Activated naive CD4-positive, alpha-beta T cell treated with anti-CD3 and anti-CD28 coated beads for 36 hours (primary cell): ENCODE measurements at regions of chr4 and their contacts with region 1.

Region 1: DNA sequence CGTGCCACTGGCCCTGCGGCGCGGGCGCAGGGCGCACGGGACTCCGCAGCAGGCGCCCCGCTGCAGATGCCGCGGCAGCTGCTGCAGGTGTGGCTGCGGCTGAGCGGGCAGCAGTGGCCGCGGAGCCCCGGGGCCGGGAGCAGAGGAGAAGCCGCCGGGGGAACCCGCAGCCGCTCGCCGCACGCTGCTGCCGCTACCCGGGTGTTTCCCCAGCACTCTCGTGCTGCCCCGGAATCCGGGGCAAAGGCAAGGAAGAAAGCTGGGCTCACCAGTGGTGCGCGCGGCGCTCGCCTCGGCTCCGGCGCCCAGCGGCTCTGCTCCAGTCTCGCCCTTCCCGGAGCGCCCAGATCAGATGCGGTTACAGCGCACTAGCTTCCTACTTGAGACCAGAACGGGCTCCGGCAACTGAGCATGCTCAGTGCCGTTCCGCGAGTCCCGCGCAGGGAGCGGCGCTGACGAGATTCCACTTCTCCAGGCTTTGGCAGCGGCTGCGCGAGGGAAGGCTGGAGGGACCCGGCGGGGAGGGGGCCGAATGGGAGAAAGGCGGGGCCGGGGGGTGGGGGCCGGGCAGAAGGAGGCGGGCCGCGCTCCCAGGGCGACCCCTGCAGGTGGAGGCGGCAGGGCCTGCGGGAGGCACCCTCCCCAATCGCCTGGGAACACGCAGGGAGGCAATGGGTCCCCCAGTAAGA is at the start of gene APBB2:
- DNase-seq: peak; percentile 66
- H3K4me3 Mint-ChIP-seq: peak within 1 kb of the TSS; percentile 79
- H3K27ac Mint-ChIP-seq: no peak within 1 kb of the TSS
- H3K4me1 Mint-ChIP-seq: peaks cover 22% of the 10 kb centered on the region
- H3K27me3 Mint-ChIP-seq: peaks cover 47% of the 10 kb centered on the region
- total RNA-seq, gene APBB2: 4.5 to 4.8 TPM

Region 2: DNA sequence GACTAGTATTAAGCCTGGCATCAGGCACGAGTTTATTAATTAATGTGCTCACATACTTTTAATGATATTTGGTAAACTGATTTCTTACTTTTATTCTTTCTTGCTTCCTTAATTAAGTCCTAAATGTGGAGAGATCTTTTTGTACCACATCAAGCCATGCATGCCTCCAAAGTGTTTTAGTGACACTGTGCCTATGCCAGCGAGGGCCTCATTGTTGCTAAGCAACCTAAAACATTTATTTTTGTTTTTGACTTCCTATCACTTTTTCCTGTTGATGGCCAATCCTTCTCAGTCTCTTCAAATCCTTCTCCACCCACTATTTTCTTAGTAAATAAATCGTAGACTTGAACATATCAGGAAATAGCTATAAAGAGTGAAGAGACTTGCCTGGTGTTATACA is 470.1 kb before region 1 on chr4:
- CTCF ChIA-PET with region 1: no interaction called
- intact Hi-C with region 1: loop called (anchors 5 kb)
- DNase-seq: no peak
- H3K4me3 Mint-ChIP-seq: no peak overlapping the region
- H3K27ac Mint-ChIP-seq: no peak overlapping the region
- H3K4me1 Mint-ChIP-seq: no peaks in the 10 kb centered on the region
- H3K27me3 Mint-ChIP-seq: peaks cover 1% of the 10 kb centered on the region

Region 3: DNA sequence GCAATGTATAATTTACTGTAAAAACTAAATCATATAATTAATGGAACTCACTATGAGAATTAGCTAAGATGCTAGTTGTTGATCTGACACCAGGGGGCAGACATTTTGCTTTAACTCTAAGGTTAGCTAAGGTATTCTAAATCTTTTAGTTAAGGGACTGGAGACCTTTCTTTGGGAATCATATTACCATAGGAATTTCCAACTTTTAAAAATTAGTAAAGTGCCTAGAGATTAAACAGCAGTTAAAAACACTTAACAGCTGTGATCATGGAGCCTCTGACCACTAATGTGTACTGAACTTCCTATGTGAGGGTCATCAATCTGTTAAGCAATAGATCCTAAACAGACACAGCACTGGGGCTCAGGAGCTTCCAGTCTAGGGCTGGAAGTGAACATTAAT is 237.9 kb before region 1 on chr4:
- CTCF ChIA-PET with region 1: interaction called, 5 read pairs
- intact Hi-C with region 1: loop called (anchors 1 kb)
- DNase-seq: peak; percentile 47
- H3K4me3 Mint-ChIP-seq: no peak overlapping the region
- H3K27ac Mint-ChIP-seq: no peak overlapping the region
- H3K4me1 Mint-ChIP-seq: no peaks in the 10 kb centered on the region
- H3K27me3 Mint-ChIP-seq: peaks cover 9% of the 10 kb centered on the region

Region 4: GRCh38 chr4:41257257-41257901 is 43.1 kb after region 1 on chr4:
- CTCF ChIA-PET with region 1: no interaction called
- intact Hi-C with region 1: loop called (anchors 2 kb)
- DNase-seq: peak; percentile 29
- H3K4me3 Mint-ChIP-seq: peak overlapping the region; percentile 60
- H3K27ac Mint-ChIP-seq: no peak overlapping the region
- H3K4me1 Mint-ChIP-seq: peaks cover 8% of the 10 kb centered on the region
- H3K27me3 Mint-ChIP-seq: peaks cover 57% of the 10 kb centered on the region

Region 5: GRCh38 chr4:41307638-41308037 is 93.4 kb after region 1 on chr4:
- CTCF ChIA-PET with region 1: no interaction called
- intact Hi-C with region 1: no loop called
- DNase-seq: no peak
- H3K4me3 Mint-ChIP-seq: no peak overlapping the region
- H3K27ac Mint-ChIP-seq: no peak overlapping the region
- H3K4me1 Mint-ChIP-seq: no peaks in the 10 kb centered on the region
- H3K27me3 Mint-ChIP-seq: peaks cover 9% of the 10 kb centered on the region

Region 6: GRCh38 chr4:41661442-41662076 is 447.3 kb after region 1 on chr4:
- CTCF ChIA-PET with region 1: no interaction called
- intact Hi-C with region 1: loop called (anchors 5 kb)
- DNase-seq: peak; percentile 66
- H3K4me3 Mint-ChIP-seq: no peak overlapping the region
- H3K27ac Mint-ChIP-seq: no peak overlapping the region
- H3K4me1 Mint-ChIP-seq: peaks cover 4% of the 10 kb centered on the region
- H3K27me3 Mint-ChIP-seq: peaks cover 2% of the 10 kb centered on the region

Region 7: DNA sequence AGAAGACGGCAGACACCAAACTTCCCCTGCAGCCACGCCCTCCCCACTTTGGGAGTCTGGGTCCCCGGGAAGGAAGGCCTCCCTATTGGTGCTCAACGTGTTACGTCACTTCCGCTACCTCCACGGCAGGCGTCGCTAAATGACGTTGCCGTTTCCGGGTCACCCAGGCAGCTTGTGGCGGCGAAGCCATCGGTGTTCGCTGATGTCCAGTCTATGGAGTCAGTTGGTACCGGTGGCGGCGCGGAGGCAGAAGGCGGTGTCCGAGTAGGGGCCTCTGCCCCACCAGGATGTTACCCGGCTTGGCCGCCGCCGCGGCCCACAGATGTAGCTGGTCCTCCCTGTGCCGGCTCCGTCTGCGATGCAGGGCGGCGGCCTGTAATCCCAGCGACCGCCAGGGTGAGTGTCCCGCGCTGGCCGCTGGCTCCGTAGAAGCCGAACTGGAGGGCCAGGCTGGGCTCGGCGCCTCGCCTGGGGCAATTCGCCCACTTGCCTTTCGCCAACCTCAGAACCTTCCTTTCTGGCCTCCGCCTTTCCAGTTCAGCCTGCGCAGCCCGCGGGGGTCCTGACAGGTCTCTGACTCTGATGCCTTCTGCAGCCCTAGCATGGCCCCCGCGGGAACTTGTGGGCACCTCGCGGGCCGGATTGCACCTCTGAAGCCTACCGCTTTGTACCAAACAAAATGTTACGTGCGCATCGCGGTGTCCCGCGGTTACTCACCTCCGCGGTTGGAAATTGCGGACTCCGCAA is 776.3 kb after region 1 on chr4 and contains the start of gene SLC30A9:
- CTCF ChIA-PET with region 1: no interaction called
- intact Hi-C with region 1: loop called (anchors 5 kb)
- DNase-seq: peak; percentile 96
- H3K4me3 Mint-ChIP-seq: peak within 1 kb of the TSS; percentile 98
- H3K27ac Mint-ChIP-seq: peak within 1 kb of the TSS; percentile 94
- H3K4me1 Mint-ChIP-seq: peaks cover 24% of the 10 kb centered on the region
- H3K27me3 Mint-ChIP-seq: no peaks in the 10 kb centered on the region
- total RNA-seq, gene SLC30A9: 36.2 to 36.3 TPM